ENCODE measurements at regions of chr1 and their contacts with region 1.

Region 1: DNA sequence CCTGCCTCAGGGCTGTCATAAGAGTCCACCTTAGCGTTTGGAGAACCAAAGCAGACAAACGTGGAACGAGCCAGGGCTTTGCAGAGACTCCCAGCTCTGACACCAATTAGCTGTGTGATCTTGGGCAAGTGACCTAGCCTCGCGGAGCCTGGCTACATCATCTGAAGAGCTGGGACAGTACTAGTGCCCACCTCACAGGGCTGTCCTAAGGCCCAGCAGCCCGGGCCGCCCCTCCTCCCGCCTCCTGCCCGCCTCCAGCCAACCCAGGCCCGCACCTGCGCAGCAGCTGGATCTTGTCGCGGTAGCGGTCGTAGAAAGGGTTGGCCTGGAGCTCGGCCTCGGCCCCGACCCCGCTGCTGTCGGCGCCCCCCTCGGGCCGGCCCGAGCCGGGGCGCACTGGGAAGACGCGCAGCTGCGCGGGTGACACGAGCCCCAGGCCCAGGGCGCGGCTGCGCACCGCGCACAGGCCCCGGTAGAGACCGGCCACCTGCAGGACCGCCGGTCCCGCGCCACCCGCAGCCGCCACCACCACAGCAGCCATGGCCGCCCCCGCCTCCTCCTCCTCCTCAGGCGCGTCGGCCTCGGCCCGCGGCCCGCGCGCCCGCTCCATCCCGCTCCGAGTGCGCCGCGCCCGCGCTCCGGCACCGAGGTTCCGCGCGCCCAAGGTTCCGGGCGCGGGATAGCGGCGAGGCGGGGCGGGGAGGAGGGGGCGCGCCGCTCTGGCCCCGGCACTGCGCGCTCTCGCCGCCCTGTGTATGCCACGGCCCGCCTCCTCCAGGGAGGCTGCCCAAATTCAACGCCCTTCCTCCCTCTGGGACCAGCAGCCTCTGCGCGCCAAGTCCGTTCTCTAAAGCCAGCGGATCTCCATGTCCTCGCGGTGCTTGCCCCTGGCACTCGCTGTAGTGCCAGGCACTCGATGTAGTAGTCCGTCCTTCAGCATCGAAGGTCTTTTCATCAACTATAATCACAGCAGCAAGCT is at the start of gene ATPAF1:
- DNase-seq: peak; percentile 62
- H3K4me3 Mint-ChIP-seq: peak within 1 kb of the TSS; percentile 85
- H3K27ac Mint-ChIP-seq: peak within 1 kb of the TSS; percentile 58
- H3K4me1 Mint-ChIP-seq: peaks cover 25% of the 10 kb centered on the region
- H3K27me3 Mint-ChIP-seq: no peaks in the 10 kb centered on the region
- total RNA-seq, gene ATPAF1: 40.9 and 46.3 TPM in 2 replicates

Region 2: GRCh38 chr1:46595127-46595526 is 72.9 kb before region 1 on chr1:
- intact Hi-C with region 1: no loop called
- DNase-seq: no peak
- H3K4me3 Mint-ChIP-seq: peak overlapping the region; percentile 26
- H3K27ac Mint-ChIP-seq: peak overlapping the region; percentile 36
- H3K4me1 Mint-ChIP-seq: peaks cover 87% of the 10 kb centered on the region
- H3K27me3 Mint-ChIP-seq: no peaks in the 10 kb centered on the region

Region 3: GRCh38 chr1:46616277-46617107 is 51.6 kb before region 1 on chr1 and contains the start of gene MOB3C:
- intact Hi-C with region 1: loop called (anchors 1 kb)
- DNase-seq: peak; percentile 51
- H3K4me3 Mint-ChIP-seq: peak within 1 kb of the TSS; percentile 90
- H3K27ac Mint-ChIP-seq: peak within 1 kb of the TSS; percentile 87
- H3K4me1 Mint-ChIP-seq: peaks cover 51% of the 10 kb centered on the region
- H3K27me3 Mint-ChIP-seq: peaks cover 2% of the 10 kb centered on the region
- total RNA-seq, gene MOB3C: 16.9 and 17.0 TPM in 2 replicates

Region 4: DNA sequence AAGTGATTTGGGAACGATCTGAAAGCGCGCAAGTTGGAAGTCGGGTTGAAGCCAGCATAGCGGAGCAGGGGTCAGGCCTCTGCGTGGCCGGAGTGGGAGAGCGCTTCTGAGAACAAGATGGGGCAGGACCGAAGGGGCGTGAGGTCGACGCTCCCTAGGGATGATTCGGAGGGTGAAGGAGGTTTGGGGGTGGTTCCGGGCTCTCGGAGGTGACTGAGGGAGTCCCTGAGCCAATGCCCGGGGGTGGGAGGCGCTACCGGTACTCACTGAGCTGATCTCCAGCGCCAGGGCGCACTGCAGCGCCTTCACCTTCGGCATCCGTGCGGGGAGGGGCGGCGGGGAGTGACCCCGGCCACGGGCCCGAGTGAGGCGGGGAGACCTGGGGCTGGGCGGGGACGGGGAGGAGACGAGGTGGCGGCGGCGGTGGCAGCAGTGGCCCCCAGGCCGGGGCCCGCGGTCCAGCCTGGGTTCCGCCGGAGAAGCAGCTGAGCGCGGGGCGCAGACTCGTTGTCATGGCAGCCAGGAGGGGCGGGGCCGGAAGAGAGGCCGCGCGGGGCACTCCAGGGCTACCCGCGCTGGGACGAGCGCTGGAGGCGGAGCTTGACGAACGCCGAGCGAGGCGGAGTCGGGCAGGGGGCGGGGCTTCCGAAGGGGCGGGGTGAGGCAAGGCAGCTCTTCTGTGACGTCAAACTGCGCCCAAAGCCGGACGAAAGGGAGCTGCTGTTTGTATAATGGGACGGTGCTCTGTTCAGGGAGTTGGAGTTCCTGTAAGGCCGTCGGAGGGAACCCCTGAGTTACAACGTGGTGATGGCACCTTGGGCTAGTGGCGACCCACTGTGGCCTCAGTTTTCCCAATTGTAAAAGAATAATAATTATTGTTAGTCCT is 1803.9 kb after region 1 on chr1 and contains the start of gene SPATA6:
- intact Hi-C with region 1: no loop called
- DNase-seq: peak; percentile 89
- H3K4me3 Mint-ChIP-seq: peak within 1 kb of the TSS; percentile 85
- H3K27ac Mint-ChIP-seq: peak within 1 kb of the TSS; percentile 40
- H3K4me1 Mint-ChIP-seq: peaks cover 12% of the 10 kb centered on the region
- H3K27me3 Mint-ChIP-seq: peaks cover 36% of the 10 kb centered on the region
- total RNA-seq, gene SPATA6: 0.91 and 1.0 TPM in 2 replicates